GM23248 (cell line): ENCODE measurements at regions of chr12 and their contacts with region 1.

Region 1: DNA sequence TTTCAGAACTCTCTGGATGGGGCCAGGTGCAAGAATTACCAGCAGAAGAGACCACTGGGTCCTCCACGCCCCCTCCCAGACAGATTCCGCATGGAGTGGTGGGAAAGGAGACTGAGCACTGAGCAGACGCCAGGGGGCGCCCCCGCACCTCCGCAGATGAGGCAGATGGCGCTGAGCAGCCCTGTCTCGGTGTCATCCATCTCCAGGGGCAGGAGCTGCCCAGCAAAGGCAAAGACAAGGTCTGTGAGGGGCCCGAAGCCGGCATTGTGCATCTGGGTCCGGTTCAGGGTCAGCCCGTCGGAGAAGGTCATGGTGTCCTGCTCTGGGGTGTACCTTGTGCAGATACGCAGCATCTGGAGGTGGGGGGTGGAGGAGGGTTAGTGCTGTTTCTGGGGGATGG is 6.3 kb upstream of the ITGB7 start:
- DNase-seq: peak; percentile 83
- H3K4me3 ChIP-seq: no peak overlapping the region
- H3K27ac ChIP-seq: 0 out of 2 replicates have a peak overlapping the region, but pooled peaks have one; percentile 10
- H3K4me1 ChIP-seq: peaks cover 31% of the 10 kb centered on the region
- H3K27me3 ChIP-seq: no peaks in the 10 kb centered on the region

Region 2: DNA sequence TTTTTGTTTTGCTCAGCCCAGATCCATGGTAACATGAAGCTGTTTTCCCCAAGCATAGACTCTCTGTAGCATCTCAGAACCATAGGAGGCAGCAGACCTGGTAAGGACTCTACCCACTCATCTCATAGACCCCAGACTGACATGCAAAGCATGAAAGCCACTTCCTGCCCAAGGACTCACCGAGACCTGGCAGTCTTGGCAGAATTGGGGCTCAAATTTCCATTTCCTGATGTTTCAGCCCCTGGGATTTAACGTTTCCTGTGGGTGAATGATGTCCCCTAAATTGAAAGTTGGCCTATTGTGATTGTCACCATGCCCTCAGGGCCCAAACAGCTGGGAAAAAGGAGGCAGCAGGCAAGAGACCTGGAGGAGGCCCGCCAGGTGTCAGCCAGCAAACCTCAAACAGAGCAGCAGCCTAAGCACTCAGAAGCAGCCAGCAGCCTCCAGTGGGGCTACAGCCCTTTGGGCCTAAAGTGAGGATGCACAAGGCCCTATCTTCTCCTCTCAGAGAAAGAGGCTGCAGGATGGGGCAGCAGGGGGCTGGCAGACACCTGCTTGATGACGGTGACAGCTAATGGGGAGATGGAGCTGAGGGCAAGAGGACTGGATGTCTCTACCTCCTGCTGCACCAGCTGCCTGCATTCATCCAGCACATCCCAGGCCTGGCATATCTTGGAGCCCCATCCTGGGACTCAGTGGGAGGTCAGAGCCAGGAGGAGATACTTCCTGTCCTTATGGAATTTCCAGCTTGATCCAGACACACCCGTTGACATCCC is 854.6 kb before region 1 on chr12:
- in situ Hi-C with region 1: no loop called
- DNase-seq: no peak
- H3K4me3 ChIP-seq: no peak overlapping the region
- H3K27ac ChIP-seq: no peak overlapping the region
- H3K4me1 ChIP-seq: no peaks in the 10 kb centered on the region
- H3K27me3 ChIP-seq: peaks cover 39% of the 10 kb centered on the region

Region 3: DNA sequence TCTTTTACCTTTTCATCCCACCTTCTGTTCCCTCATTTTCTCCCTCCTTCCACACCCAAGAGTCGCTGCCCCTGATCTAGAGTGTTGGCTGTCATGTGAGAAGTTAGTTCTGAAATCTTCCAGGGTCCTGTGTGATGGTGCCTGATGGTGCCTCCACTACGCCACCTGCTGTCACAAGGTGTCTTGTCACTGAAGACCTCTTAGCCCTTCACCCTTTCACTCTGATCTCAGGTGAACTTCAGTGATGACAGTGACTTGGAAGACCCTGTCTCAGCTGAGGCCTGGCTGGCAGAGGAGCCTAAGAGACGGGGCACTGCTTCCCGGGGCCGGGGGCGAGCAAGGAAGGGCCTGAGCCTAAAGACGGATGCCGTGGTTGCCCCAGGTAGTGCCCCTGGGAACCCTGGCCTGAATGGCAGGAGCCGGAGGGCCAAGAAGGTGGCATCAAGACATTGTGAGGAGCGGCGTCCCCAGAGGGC is 74.4 kb after region 1 on chr12:
- in situ Hi-C with region 1: loop called (anchors 10 kb)
- DNase-seq: peak; percentile 73
- H3K4me3 ChIP-seq: no peak overlapping the region
- H3K27ac ChIP-seq: no peak overlapping the region
- H3K4me1 ChIP-seq: peaks cover 21% of the 10 kb centered on the region
- H3K27me3 ChIP-seq: no peaks in the 10 kb centered on the region

Region 4: GRCh38 chr12:53518381-53518780 is 305.0 kb after region 1 on chr12:
- in situ Hi-C with region 1: no loop called
- DNase-seq: peak; percentile 29
- H3K4me3 ChIP-seq: no peak overlapping the region
- H3K27ac ChIP-seq: no peak overlapping the region
- H3K4me1 ChIP-seq: no peaks in the 10 kb centered on the region
- H3K27me3 ChIP-seq: no peaks in the 10 kb centered on the region